Heart left ventricle (tissue), 16 donors: ENCODE measurements at regions of chr17 and their contacts with region 1.

Region 1: GRCh38 chr17:51668155-51668962 is 408.0 kb downstream of the UTP18 start:
- DNase-seq: no peak
- ATAC-seq: no peak
- H3K4me3 ChIP-seq: no peak overlapping the region
- H3K27ac ChIP-seq: no peak overlapping the region
- H3K4me1 ChIP-seq: peaks cover 0 to 7% (median 0%) of the 10 kb centered on the region in 12 donors
- H3K27me3 ChIP-seq: no peaks in the 10 kb centered on the region
- CTCF ChIP-seq: no peak
- POLR2A ChIP-seq: no peak

Region 2: DNA sequence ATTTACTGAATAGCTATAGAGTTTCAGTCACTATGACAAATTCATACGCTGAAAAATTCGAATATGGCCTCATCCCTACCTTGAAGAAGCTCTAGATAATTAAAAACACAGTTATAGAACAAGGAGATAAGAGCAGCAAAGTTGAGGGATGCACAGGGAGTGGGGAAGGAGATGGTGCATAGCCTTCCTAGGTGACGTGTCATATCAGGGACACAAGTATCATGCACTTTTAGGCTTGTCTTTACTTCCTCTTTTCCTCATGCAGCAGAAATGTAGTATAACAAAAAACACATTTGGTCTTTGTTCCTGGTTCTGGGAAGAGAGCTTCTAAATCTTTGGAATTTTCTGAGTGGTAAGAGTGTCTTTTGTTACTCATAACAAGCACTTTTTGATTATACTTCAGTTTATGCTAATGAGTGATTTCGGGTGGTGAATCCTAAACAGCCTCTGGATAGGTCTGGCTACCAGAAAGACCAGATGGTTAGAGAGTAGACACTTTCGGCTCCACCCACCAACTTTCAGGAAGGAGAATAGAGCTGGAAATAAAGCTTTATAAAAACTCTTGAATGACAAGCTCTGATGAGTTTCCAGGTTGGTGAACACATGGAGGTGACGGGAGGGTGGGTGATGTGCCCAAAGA is 66.6 kb before region 1 on chr17:
- intact Hi-C with region 1: loop called in 1 of 10 experiments (anchors 10 kb)
- DNase-seq: no peak
- ATAC-seq: no peak
- H3K4me3 ChIP-seq: no peak overlapping the region
- H3K27ac ChIP-seq: no peak overlapping the region
- H3K4me1 ChIP-seq: peaks cover 0 to 4% (median 0%) of the 10 kb centered on the region in 12 donors
- H3K27me3 ChIP-seq: peaks cover 0 to 2% (median 0%) of the 10 kb centered on the region in 9 donors
- CTCF ChIP-seq: no peak
- POLR2A ChIP-seq: no peak